Activated T-helper 2 cell treated with anti-CD3 and anti-CD28 coated beads, Interferon-gamma antibody, Interleukin-2, Interleukin-4, amounts not matched to agents 10 μg/mL and 5 μg/mL and 100 μg/mL, durations not matched to agents 14 hours and 24 hours and 36 hours (primary cell): ENCODE measurements at regions of chr15 and their contacts with region 1.

Region 1: GRCh38 chr15:73284090-73284716 is 84.6 kb downstream of the HCN4 start:
- DNase-seq: no peak
- H3K4me3 Mint-ChIP-seq: no peak overlapping the region
- H3K27ac Mint-ChIP-seq: no peak overlapping the region
- H3K4me1 Mint-ChIP-seq: peaks cover 21% of the 10 kb centered on the region
- H3K27me3 Mint-ChIP-seq: no peaks in the 10 kb centered on the region

Region 2: GRCh38 chr15:73325193-73325861 is 41.1 kb after region 1 on chr15:
- intact Hi-C with region 1: no loop called
- DNase-seq: no peak
- H3K4me3 Mint-ChIP-seq: no peak overlapping the region
- H3K27ac Mint-ChIP-seq: no peak overlapping the region
- H3K4me1 Mint-ChIP-seq: peaks cover 4% of the 10 kb centered on the region
- H3K27me3 Mint-ChIP-seq: peaks cover 3% of the 10 kb centered on the region

Region 3: DNA sequence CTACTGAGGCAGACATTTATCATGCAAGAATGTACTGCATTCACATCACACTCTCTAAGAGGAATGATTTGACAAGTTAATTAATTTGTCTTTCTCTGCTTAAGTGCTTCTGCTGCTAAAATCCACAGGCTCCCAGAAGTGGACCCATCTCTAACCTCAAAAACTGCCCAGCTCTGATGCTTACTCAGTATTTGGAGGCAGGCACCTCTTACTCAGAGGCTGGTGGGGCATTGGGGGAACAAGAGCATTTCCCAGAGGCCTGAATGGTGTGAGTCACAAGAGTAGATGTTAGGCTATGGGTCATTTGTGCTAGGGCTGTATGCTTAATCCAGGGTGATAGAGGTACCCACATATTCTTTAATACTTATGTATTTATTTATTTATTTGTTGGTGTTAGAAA is 119.0 kb after region 1 on chr15:
- intact Hi-C with region 1: no loop called
- DNase-seq: no peak
- H3K4me3 Mint-ChIP-seq: no peak overlapping the region
- H3K27ac Mint-ChIP-seq: no peak overlapping the region
- H3K4me1 Mint-ChIP-seq: no peaks in the 10 kb centered on the region
- H3K27me3 Mint-ChIP-seq: peaks cover 2% of the 10 kb centered on the region

Region 4: GRCh38 chr15:73560501-73561117 is 276.4 kb after region 1 on chr15:
- intact Hi-C with region 1: loop called (anchors 10 kb)
- DNase-seq: no peak
- H3K4me3 Mint-ChIP-seq: no peak overlapping the region
- H3K27ac Mint-ChIP-seq: no peak overlapping the region
- H3K4me1 Mint-ChIP-seq: peaks cover 8% of the 10 kb centered on the region
- H3K27me3 Mint-ChIP-seq: no peaks in the 10 kb centered on the region

Region 5: GRCh38 chr15:73683777-73684580 is 399.8 kb after region 1 on chr15 and contains the start of gene CD276:
- intact Hi-C with region 1: loop called (anchors 10 kb)
- DNase-seq: no peak
- H3K4me3 Mint-ChIP-seq: peak within 1 kb of the TSS; percentile 85
- H3K27ac Mint-ChIP-seq: peak within 1 kb of the TSS; percentile 62
- H3K4me1 Mint-ChIP-seq: peaks cover 27% of the 10 kb centered on the region
- H3K27me3 Mint-ChIP-seq: peaks cover 44% of the 10 kb centered on the region
- total RNA-seq, gene CD276: 16.7 and 17.0 TPM in 2 replicates